ENCODE measurements at regions of chr5 and their contacts with region 1.

Region 1: GRCh38 chr5:73215891-73216610 is 43.1 kb downstream of the TMEM174 start:
- DNase-seq: peak; percentile 84
- ATAC-seq: peak; percentile 90
- H3K4me3 Mint-ChIP-seq: peak overlapping the region; percentile 64
- H3K27ac Mint-ChIP-seq: no peak overlapping the region
- H3K4me1 Mint-ChIP-seq: peaks cover 23% of the 10 kb centered on the region
- H3K27me3 Mint-ChIP-seq: peaks cover 68% of the 10 kb centered on the region
- CTCF ChIP-seq: peak; percentile 71; the same call in 1 of the 2 replicates

Region 2: DNA sequence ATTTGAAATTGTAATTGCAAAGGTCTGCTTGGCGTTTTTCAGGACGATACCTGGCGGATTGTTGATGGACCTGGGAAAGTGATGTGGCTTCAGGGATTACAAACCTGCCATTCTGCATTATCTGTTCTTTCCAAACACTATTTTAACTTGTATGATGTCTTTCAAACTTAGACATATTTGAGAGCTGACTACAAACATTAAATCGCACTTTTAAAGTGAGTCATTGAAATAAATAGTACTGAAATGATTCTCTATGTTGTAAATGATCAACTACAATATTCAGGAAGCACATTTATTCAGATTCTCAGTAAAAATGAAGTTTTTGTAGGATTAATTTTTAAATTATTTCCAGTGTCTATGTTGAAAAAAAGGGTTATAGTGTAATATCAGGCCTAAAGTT is 128.0 kb before region 1 on chr5:
- CTCF ChIA-PET with region 1: interaction called, 21 read pairs
- POLR2A ChIA-PET with region 1: no interaction called
- DNase-seq: no peak
- ATAC-seq: no peak
- H3K4me3 Mint-ChIP-seq: no peak overlapping the region
- H3K27ac Mint-ChIP-seq: no peak overlapping the region
- H3K4me1 Mint-ChIP-seq: 0 out of 2 replicates have a peak, but pooled peaks cover 2% of the 10 kb centered on the region
- H3K27me3 Mint-ChIP-seq: no peaks in the 10 kb centered on the region
- CTCF ChIP-seq: no peak

Region 3: DNA sequence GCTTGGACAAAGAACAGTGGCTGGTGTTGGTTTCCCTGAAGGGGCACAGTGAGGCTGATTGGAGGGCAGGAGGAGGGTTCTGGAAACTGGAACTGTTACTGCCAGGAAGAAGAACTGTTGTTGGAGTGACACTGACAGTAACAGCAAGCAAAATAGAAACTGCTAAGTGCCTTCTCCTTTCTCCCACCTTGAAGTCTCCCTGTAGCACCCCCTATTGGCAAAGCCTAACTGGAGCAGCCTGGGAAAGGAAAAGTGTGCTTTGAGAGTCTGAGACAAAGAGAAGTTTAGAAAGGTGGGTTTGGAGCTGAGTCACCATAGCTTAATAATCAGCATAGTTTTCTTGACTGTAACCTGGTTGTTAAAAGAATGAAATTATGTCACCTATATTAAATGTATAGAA is 45.5 kb before region 1 on chr5:
- CTCF ChIA-PET with region 1: interaction called, 36 read pairs
- POLR2A ChIA-PET with region 1: no interaction called
- DNase-seq: peak; percentile 64
- ATAC-seq: peak; percentile 90
- H3K4me3 Mint-ChIP-seq: no peak overlapping the region
- H3K27ac Mint-ChIP-seq: no peak overlapping the region
- H3K4me1 Mint-ChIP-seq: peaks cover 20% of the 10 kb centered on the region
- H3K27me3 Mint-ChIP-seq: no peaks in the 10 kb centered on the region
- CTCF ChIP-seq: no peak; the same call in 1 of the 2 replicates

Region 4: DNA sequence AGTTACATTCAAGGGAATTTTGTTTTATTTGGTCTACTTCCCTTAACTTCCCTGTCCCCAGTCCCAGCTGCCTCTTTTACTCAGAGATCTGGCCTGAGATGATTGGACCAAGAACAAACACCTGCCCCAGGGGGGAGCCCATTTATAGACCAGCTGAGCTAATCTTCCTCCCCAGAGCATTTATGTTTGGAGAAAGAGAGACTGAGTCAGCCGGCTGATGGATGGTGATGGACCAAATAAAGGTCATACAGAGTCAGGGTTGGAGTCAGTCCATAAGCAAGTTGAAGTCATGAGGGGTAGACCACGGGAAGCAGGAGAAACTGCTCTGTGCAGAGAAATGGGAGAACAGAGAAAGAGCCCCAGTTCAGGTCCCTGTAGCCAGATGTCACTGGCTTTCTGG is 34.6 kb after region 1 on chr5:
- CTCF ChIA-PET with region 1: interaction called, 15 read pairs
- POLR2A ChIA-PET with region 1: no interaction called
- DNase-seq: no peak
- ATAC-seq: no peak
- H3K4me3 Mint-ChIP-seq: no peak overlapping the region
- H3K27ac Mint-ChIP-seq: no peak overlapping the region
- H3K4me1 Mint-ChIP-seq: peaks cover 23% of the 10 kb centered on the region
- H3K27me3 Mint-ChIP-seq: peaks cover 12% of the 10 kb centered on the region
- CTCF ChIP-seq: no peak

Region 5: DNA sequence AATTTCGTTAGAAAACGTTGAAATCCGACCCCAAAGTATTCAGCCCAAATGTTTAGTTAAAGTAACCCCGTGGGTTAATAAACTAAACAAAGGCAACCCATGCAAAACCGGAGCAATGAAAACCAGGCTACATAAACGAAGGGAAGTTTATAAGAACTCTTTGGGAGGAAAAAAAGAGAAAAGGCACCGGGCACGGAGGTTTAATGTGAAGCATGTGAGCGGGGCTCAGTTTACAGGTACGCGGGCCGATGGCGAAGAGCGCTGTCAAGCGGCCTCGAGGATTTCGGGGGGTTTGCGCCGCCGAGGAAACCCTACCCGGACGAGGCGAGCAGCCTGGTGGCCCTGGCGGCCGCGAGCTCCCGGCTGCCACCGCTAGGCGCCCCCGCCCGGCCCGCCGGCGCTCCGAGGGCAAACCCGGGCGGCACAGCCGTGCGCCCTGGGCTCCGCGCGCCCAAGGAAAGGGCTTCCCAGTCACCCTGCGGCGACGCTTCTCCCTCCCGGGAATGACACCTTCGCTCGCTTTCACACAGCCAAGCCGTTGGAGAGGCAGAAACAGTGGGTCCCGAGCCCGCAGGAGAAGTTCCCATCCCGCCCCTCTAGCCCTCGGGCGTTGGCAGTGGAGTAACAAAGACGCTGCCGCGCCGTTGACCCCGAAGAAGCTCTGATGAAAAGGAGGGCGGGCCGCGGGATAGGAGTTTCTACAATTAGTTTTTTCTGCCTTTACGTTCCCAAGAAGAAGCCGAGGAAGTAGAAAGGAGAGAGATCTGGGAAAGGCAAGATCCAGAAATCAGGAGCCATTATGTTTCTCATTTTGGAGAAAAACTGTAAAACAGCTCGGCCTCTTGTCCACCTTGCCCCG is 83.0 kb after region 1 on chr5:
- CTCF ChIA-PET with region 1: interaction called, 92 read pairs
- POLR2A ChIA-PET with region 1: interaction called, 3 read pairs
- DNase-seq: peak; percentile 62
- ATAC-seq: peak; percentile 38
- H3K4me3 Mint-ChIP-seq: peak overlapping the region; percentile 69
- H3K27ac Mint-ChIP-seq: no peak overlapping the region
- H3K4me1 Mint-ChIP-seq: peaks cover 54% of the 10 kb centered on the region
- H3K27me3 Mint-ChIP-seq: peaks cover 100% of the 10 kb centered on the region
- CTCF ChIP-seq: no peak

Region 6: DNA sequence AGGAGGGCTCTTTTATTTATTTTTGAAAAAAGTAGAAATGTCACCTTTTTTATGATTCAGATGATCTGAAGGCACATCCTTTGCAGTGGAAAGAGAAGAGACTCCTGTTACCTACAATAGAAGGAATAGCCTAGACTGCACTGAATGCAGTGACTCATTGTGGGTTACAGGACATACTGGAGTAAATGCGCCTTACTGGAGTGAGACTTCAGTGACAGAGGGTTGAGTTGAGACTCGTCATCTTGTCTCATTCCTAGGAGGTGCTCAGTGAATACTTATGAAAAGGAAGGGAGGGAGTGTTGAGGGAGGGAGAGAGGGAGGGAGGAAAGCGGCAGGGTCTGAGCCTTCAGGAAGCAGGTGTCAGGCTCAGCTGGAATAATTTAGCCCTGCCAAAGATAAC is 324.1 kb after region 1 on chr5:
- CTCF ChIA-PET with region 1: interaction called, 13 read pairs
- POLR2A ChIA-PET with region 1: no interaction called
- DNase-seq: no peak
- ATAC-seq: no peak
- H3K4me3 Mint-ChIP-seq: no peak overlapping the region
- H3K27ac Mint-ChIP-seq: no peak overlapping the region
- H3K4me1 Mint-ChIP-seq: peaks cover 20% of the 10 kb centered on the region
- H3K27me3 Mint-ChIP-seq: no peaks in the 10 kb centered on the region; the same call in 1 of the 2 replicates
- CTCF ChIP-seq: no peak